CD14-positive monocyte (primary cell): ENCODE measurements at regions of chr1 and their contacts with region 1.

Region 1: DNA sequence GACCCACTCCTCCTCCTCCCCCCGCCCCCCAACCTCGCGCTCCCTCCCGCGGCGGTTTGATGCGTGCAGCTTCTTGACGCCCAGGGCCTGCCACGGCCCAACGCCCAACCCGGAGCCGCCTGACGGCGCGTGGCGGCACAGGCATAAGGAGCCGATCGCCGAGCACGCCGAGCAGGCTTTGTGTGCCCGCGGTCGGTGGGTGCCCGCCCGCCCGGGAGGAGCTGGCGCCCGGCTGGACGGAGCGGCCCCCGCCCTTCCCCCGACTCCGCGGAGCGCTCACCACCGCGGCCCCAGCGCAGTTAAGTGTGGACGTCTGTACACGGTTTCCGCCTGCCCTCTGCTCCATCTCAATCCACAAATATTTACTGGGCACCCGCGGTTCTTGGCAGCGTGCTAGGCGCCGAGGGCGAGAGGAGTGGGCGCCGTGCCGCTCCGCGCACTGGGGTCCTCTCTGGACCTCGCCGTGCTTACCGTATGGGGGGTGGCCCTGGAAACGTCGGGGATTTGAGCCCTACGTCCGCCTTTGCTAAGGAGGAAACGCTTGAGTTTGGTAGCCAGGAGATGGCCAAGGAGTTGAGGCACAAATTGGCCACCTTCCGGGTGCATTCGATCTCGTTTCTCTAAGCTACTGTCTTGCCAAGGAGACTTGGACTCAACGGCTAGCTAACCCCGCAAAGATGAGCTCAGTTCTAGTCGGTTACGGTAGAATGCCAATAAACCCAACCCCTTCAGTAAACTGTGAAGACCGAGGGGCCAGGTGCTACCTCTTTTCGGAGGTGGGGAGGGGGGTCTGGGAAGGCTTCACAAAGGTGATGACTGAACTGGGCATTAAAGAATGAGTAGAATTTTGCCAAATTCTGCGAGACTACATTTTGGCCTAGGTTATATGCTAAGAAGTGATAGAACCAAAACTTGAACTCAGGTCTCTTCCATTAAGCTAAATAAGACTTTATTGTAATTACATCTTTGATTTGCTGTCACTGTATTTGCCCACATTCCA is 583 bp upstream of the HDGF start:
- DNase-seq: peak; percentile 90 to 94 (median 94)
- H3K4me3 ChIP-seq: peak overlapping the region; percentile 84 to 96 (median 84)
- H3K4me3 Mint-ChIP-seq: peak overlapping the region; percentile 89 to 95
- H3K27ac ChIP-seq: peak overlapping the region; percentile 82 to 88
- H3K27ac Mint-ChIP-seq: peak overlapping the region; percentile 90 to 94 (median 92)
- H3K4me1 ChIP-seq: peaks cover 49 to 63% of the 10 kb centered on the region in 2 donors
- H3K4me1 Mint-ChIP-seq: peaks cover 64% of the 10 kb centered on the region
- H3K27me3 ChIP-seq: no peaks in the 10 kb centered on the region
- H3K27me3 Mint-ChIP-seq: peaks cover 0 to 2% (median 0%) of the 10 kb centered on the region in 3 donors
- CTCF ChIP-seq: no peak

Region 2: GRCh38 chr1:156740679-156741612 is 11.1 kb before region 1 on chr1 and contains the start of gene MRPL24:
- intact Hi-C with region 1: loop called in 1 of 2 experiments (anchors 1 kb)
- DNase-seq: peak; percentile 98 to 99 (median 99)
- H3K4me3 ChIP-seq: peak within 1 kb of the TSS; percentile 44 to 93 (median 64)
- H3K4me3 Mint-ChIP-seq: peak within 1 kb of the TSS; percentile 95 to 97
- H3K27ac ChIP-seq: peak within 1 kb of the TSS; percentile 72 to 83
- H3K27ac Mint-ChIP-seq: peak within 1 kb of the TSS; percentile 89 to 97 (median 96)
- H3K4me1 ChIP-seq: peaks cover 21 to 31% of the 10 kb centered on the region in 2 donors
- H3K4me1 Mint-ChIP-seq: peaks cover 25% of the 10 kb centered on the region
- H3K27me3 ChIP-seq: no peaks in the 10 kb centered on the region
- H3K27me3 Mint-ChIP-seq: peaks cover 0 to 2% (median 1%) of the 10 kb centered on the region in 3 donors
- CTCF ChIP-seq: no peak
- polyA plus RNA-seq, gene MRPL24: 28.7 to 47.0 (median 38.4) TPM